ENCODE measurements at regions of chr9 and their contacts with region 1.

Region 1: DNA sequence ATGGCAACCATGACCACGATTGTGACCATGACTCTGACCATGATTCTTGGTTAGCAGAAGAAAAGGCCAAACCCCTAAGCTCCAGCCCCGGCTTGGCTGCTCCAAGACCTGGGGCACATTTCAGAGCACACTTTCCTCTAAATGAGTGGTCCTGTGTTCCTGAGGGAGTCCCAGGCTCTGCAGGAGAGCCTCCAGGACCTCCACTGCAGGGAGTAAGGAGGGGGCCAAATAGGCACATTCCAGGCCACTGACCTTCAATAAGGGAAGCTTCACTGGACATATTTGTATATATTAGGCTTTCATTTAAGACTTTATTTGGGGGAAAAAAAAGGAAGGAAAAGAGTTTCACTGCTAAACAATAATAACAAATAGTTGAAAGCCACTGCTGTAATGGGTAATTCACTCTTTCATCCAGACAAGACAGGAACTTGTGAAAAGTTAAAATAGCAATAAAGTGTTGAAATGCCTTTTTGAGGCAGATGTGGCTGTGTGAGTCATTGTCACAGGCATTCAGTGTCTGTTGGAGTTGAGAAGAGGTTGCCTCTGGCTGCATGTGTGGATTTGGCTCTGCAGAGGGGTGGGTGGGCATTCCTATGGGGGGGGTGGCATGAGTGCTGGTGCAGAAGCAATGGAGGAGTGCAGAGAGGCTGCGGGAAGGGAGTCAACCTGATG is 63.9 kb upstream of the TGFBR1 start:
- DNase-seq: peak in 3 of 10 donors; percentile 21 to 55 (median 40)
- H3K4me3 ChIP-seq: no peak overlapping the region
- H3K27ac ChIP-seq: peak overlapping the region in 40 of 59 donors; percentile 3 to 86 (median 47)
- H3K27me3 ChIP-seq: no peaks in the 10 kb centered on the region
- CTCF ChIP-seq: no peak

Region 2: GRCh38 chr9:99057665-99058625 is 16.9 kb after region 1 on chr9:
- intact Hi-C with region 1: loop called in 1 of 2 experiments (anchors 2 kb)
- DNase-seq: peak in 1 of 10 donors; percentile 42
- H3K4me3 ChIP-seq: no peak overlapping the region
- H3K27ac ChIP-seq: peak overlapping the region in 40 of 59 donors; percentile 11 to 78 (median 54)
- H3K27me3 ChIP-seq: peaks cover 0 to 2% (median 0%) of the 10 kb centered on the region in 45 donors
- CTCF ChIP-seq: no peak

Region 3: DNA sequence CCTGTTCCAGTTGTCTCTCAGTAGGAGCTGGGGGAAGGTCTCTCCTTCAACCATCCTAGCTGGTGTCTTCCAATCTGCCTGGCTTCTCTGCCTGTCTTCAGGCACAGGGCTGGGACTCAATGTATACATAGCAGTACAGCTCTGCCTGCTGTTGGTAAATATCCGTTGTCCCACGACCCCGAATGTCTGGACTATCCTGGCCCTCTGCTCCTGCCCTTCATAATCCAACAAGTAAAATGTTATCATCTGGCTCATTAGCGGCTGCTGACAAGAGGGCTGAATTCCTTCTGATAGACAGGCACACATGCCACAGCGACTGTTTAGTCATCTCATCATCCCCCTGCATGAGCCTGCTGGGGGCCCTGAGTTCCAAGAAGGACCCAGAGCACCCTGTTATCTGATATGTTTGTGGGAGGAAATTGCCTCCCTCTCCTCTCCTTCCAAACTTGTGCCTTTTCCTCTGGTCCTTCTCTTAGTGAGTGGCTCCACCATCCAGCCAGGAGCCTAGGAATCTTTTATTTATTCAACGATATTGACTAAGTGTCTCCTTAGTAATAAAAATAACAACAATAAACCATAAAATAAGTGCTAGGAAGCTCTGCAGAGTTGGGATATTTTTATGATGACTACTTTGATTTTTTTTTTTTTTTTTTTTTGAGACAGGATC is 34.3 kb after region 1 on chr9:
- intact Hi-C with region 1: no loop called
- DNase-seq: no peak
- H3K4me3 ChIP-seq: no peak overlapping the region
- H3K27ac ChIP-seq: no peak overlapping the region
- H3K27me3 ChIP-seq: peaks cover 0 to 5% (median 0%) of the 10 kb centered on the region in 45 donors
- CTCF ChIP-seq: no peak

Measured in dorsolateral prefrontal cortex (tissue), 120 donors.